Activated B cell treated with CpG ODN at 0.5 μM for 24 hours (primary cell): ENCODE measurements at regions of chr6 and their contacts with region 1.

Region 1: DNA sequence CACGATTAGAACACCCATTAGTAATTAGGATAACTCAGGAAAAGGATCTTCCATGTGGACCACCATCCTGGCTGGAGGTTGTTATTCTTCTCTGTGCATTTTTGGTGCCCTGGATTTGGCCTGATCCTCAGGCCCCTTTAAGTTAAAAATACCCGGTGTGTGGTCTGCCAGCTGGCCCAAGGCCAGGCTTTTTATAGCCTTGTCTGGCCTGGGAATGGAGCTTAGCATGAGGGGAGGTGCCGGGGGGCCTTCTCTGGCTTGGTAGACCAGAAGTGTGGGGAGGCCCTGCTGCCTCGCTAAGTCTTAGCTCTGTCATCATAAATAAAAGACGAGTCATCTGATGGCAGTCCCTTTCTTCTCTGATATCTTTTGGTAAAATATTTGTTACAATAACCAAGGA is 71.4 kb downstream of the ARID1B start:
- DNase-seq: no peak
- ATAC-seq: no peak
- H3K4me3 Mint-ChIP-seq: no peak overlapping the region
- H3K27ac Mint-ChIP-seq: peak overlapping the region; percentile 76
- H3K4me1 Mint-ChIP-seq: peaks cover 98% of the 10 kb centered on the region
- H3K27me3 Mint-ChIP-seq: no peaks in the 10 kb centered on the region
- CTCF ChIP-seq: no peak

Region 2: GRCh38 chr6:156703719-156704118 is 144.8 kb before region 1 on chr6:
- CTCF ChIA-PET with region 1: no interaction called
- POLR2A ChIA-PET with region 1: no interaction called
- intact Hi-C with region 1: no loop called
- DNase-seq: no peak
- ATAC-seq: no peak
- H3K4me3 Mint-ChIP-seq: no peak overlapping the region
- H3K27ac Mint-ChIP-seq: no peak overlapping the region
- H3K4me1 Mint-ChIP-seq: peaks cover 42% of the 10 kb centered on the region
- H3K27me3 Mint-ChIP-seq: no peaks in the 10 kb centered on the region
- CTCF ChIP-seq: no peak

Region 3: DNA sequence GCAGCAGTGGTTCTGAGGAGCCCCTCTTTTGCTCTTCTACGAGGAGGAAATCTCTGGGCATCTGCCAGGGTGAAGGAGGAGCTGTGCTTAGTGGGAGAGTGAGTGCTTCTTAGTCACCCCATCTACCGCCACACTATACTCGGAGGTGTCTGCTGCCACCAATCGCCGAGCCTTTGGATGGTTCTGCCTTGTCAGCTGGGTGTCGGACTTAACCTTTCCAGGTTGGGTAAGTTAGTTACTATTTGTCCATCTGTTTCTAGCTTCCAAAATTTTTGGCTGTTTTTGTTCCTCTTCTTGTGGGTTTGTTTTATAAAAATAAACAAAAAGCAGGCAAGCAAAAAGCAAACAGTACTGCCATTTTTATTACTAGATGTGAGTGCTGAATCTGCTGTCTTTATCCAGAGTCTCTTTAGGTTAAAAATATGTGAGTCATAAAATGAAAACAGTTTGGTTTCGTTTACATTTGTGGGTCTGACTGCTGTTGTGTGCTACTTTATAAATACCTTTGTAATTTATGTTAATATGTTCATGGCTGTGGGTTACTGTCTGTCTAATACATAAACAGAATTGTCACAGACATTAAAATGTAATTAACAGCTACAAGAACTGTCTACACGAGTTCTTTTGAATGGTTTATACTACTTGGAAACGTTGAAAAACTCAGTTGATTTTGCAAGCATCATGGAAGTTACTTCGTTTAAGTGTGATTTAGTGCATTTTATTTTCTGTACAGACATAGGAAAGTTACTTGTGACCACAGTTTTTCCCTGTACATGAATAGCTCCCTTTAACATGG is 17.9 kb after region 1 on chr6:
- CTCF ChIA-PET with region 1: no interaction called
- POLR2A ChIA-PET with region 1: interaction called, 8 read pairs
- intact Hi-C with region 1: loop called (anchors 2 kb)
- DNase-seq: no peak
- ATAC-seq: peak; percentile 37
- H3K4me3 Mint-ChIP-seq: peak overlapping the region; percentile 67
- H3K27ac Mint-ChIP-seq: peak overlapping the region; percentile 38
- H3K4me1 Mint-ChIP-seq: peaks cover 93% of the 10 kb centered on the region
- H3K27me3 Mint-ChIP-seq: no peaks in the 10 kb centered on the region
- CTCF ChIP-seq: no peak